AG04450 (cell line): ENCODE measurements at regions of chr14 and their contacts with region 1.

Region 1: DNA sequence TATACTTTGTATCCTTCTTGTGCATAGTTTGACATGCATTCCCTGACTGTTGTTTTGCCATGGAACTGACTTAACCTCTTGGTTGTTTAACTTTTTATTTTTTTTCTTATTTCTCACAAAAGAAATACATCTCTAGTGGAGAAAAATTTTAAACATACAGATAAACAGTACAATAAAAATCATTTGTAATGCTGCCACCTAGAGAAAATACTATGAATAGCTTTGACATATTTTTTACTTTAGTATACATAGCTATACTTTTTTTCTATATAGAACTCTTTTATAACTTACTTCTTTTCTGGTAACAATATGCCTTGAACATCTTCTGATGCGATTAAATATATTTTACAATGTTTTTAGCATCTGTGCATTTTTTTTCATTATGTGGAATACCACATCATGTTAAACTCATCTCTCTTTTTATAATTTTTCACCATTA is 184.5 kb downstream of the AKAP6 start:
- DNase-seq: no peak
- H3K4me3 ChIP-seq: no peak overlapping the region
- H3K27ac ChIP-seq: no peak overlapping the region
- H3K27me3 ChIP-seq: no peaks in the 10 kb centered on the region
- CTCF ChIP-seq: peak; percentile 40; the same call in 1 of the 2 replicates

Region 2: DNA sequence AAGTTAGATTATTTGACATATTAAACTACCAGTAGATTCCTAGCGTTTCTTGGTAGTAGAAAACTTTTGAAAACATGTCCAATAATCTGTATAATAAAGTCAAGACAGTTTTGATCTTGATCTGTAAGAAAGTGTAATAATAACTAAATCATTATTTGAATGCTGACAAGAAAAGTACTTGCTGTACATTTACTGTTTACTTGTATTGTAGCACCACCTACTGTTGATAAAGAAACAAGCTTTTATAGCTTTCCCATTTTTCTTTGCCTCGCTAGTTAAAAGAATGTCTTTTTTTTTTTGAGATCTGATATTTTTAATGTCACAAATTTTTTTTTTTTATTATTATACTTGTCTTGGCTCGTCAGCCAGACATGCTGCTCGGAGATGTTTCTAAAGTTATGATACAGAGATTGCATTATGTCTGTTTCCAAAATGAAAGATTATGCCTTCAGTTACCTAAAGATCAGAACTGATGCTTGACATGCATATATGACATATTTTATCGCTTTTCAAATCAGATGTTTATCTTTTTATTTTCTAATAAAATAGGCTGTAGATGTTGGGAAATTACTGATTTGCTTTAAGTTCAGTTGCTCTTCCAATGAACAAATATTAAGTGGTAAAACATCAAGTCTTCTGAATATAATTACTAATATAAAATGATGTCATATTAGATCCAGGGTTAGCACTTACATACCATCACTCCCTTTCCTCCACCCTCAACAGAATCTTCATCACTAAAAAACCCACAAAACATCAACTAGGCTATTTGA is 44.0 kb before region 1 on chr14:
- CTCF ChIA-PET with region 1: interaction called, 21 read pairs
- POLR2A ChIA-PET with region 1: interaction called, 6 read pairs
- DNase-seq: no peak
- H3K4me3 ChIP-seq: no peak overlapping the region
- H3K27ac ChIP-seq: no peak overlapping the region
- H3K27me3 ChIP-seq: no peaks in the 10 kb centered on the region
- CTCF ChIP-seq: peak; percentile 54

Region 3: DNA sequence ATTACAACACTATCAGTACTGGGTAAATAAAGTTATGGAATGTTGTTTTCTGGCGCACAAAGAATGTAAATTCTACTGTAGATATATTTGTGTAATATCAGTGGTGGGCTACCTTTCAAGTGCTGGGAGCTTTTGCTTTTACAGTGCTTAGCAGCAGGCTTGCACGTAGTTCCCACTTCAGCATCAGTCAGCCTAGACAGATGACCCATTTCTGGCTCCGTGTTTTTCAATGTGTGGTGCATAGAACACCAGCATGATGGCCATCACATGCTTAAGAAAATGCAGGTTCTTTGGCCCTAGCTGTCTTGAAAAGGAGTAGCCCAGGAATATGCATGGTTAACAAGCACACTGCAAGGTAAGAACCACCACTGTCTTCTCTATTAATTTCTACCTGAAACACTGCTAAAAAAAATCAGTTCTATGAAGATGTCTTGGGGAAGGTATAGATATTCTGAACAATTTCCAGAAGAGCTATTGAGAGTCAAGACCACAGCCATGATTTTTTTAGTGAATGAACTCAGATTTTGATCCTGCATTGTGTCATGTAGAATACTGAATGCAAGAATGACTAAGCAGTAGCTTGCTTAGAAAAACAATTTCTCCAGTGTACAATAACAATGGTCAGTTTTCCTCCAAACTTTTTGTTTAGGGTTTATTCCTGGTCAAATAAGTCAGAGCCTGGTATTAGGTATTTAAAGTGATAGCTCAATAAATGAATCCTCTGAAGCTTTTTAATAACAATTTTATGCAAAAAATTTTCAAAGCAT is 11.2 kb after region 1 on chr14:
- CTCF ChIA-PET with region 1: interaction called, 10 read pairs
- POLR2A ChIA-PET with region 1: no interaction called
- DNase-seq: no peak
- H3K4me3 ChIP-seq: no peak overlapping the region
- H3K27ac ChIP-seq: no peak overlapping the region
- H3K27me3 ChIP-seq: no peaks in the 10 kb centered on the region
- CTCF ChIP-seq: no peak